GM12878 (cell line): ENCODE measurements at regions of chr1 and their contacts with region 1.

Region 1: DNA sequence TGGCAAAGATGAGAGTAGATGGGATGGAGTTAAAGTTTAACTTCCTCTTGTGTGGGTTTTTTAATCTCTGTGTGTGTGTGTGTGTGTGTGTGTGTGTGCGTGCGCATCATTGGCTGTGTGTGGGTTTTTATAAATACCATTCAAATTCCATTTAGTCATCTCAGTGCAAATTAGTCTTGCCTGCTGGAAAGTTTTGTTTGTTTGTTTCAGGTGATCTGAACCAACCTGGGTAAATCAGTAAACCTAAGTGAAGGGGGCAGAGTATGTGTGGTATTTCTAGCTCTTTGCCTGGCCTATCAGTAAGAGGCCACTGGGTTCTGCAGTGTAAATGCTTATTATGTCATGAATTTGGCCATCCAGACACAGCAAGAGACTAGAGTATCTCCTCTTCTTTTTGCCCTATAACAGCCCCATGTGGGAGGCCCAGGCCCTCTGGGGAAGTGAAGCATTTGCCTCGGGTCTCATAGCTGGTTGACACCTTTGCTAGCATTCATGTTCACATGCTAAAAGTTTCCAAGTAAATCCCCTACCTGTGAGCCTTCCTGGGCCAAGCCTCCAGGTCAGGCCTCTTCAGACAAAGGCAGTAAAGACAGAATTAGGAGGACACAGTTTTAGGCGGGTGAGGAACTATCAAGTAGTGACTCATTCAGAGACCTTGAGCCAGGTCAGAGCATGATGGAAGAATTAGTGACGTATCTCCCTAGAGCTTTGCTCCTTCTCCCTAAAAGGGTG is 14.7 kb downstream of the INTS3 start:
- DNase-seq: peak; percentile 80
- ATAC-seq: peak; percentile 87
- H3K4me3 ChIP-seq: peak overlapping the region; percentile 7; the same call in 1 of the 2 replicates
- H3K27ac ChIP-seq: peak overlapping the region; percentile 77
- H3K4me1 ChIP-seq: peaks cover 32% of the 10 kb centered on the region
- H3K27me3 ChIP-seq: no peaks in the 10 kb centered on the region
- CTCF ChIP-seq: no peak
- EP300 ChIP-seq: peak; percentile 67 to 86; a peak in 2 of 4 replicates
- POLR2A ChIP-seq: no peak
- RAD21 ChIP-seq: no peak

Region 2: DNA sequence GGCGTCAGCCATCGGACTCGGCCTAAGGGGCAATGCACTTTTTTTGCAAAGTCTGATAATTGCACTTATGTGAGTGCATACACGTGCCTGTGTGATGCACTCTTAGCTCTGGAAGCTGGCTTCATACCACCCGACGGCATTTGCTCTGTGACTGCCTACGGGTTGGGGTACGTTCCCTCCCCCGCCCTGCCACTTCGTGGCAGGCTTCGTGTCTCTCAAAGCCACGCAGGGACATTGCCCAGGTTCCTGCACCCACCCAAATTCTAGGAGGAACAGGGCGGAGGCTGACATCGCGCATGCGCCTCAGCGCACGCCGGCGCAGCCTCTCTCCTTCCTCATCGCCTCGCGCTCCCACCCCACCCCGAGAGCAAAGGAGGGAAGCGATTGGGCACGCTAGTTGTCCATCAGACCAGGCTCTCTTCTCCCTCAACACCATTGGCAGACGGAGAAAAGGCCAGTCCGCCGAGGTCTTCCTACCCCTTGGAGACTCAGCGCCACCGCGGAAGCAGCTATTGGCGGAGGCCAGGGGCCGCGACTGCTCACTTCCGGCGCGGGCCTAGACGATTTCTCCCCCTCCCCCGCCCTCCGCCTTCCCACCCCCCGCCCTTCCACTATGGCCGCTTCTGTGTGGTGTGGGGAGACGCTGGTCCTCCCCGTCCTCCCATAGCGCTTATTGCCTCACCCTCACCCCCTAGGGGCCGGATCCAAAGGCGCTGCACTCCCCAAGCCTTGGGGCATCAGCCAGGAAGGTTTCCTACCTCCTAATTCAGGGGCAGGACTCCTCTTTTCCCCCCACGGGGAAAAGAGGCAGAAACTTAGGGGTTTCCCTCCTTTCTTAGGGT is 14.9 kb before region 1 on chr1 and contains the start of gene INTS3:
- CTCF ChIA-PET with region 1: interaction called, 63 read pairs
- POLR2A ChIA-PET with region 1: interaction called, 184 read pairs
- RAD21 ChIA-PET with region 1: interaction called, 139 read pairs
- SMC1A ChIA-PET with region 1: interaction called, 144 read pairs
- in situ Hi-C with region 1: no loop called
- intact Hi-C with region 1: no loop called
- DNase-seq: peak; percentile 100
- ATAC-seq: peak; percentile 92
- H3K4me3 ChIP-seq: peak within 1 kb of the TSS; percentile 100
- H3K27ac ChIP-seq: peak within 1 kb of the TSS; percentile 100
- H3K4me1 ChIP-seq: peaks cover 12% of the 10 kb centered on the region
- H3K27me3 ChIP-seq: no peaks in the 10 kb centered on the region
- CTCF ChIP-seq: peak in 2 of 3 experiments; percentile 10 to 19; a peak in 2 of 6 replicates
- EP300 ChIP-seq: no peak
- POLR2A ChIP-seq: peak; percentile 92
- RAD21 ChIP-seq: no peak
- polyA plus RNA-seq, gene INTS3: 12.6 to 14.0 TPM

Region 3: GRCh38 chr1:153888533-153888932 is 146.0 kb after region 1 on chr1:
- CTCF ChIA-PET with region 1: no interaction called
- POLR2A ChIA-PET with region 1: no interaction called
- RAD21 ChIA-PET with region 1: no interaction called
- SMC1A ChIA-PET with region 1: no interaction called
- in situ Hi-C with region 1: no loop called
- intact Hi-C with region 1: no loop called
- DNase-seq: no peak
- ATAC-seq: peak; percentile 81
- H3K4me3 ChIP-seq: peak overlapping the region; percentile 16; the same call in 1 of the 2 replicates
- H3K27ac ChIP-seq: peak overlapping the region; percentile 53; the same call in 1 of the 2 replicates
- H3K4me1 ChIP-seq: peaks cover 13% of the 10 kb centered on the region
- H3K27me3 ChIP-seq: no peaks in the 10 kb centered on the region
- CTCF ChIP-seq: no peak
- EP300 ChIP-seq: no peak
- POLR2A ChIP-seq: no peak
- RAD21 ChIP-seq: no peak